CD8-positive, alpha-beta T cell (primary cell): ENCODE measurements at regions of chr2 and their contacts with region 1.

Region 1: GRCh38 chr2:68467077-68467960 is at the starts of genes APLF and FBXO48:
- DNase-seq: peak; percentile 96 to 99 (median 98)
- ATAC-seq: peak; percentile 87
- H3K4me3 ChIP-seq: peak within 1 kb of the TSS; percentile 83 to 88
- H3K4me3 Mint-ChIP-seq: peak within 1 kb of the TSS; percentile 96
- H3K27ac ChIP-seq: peak within 1 kb of the TSS; percentile 82 to 89
- H3K27ac Mint-ChIP-seq: peak within 1 kb of the TSS; percentile 97
- H3K4me1 ChIP-seq: peaks cover 26% of the 10 kb centered on the region
- H3K4me1 Mint-ChIP-seq: peaks cover 44% of the 10 kb centered on the region
- H3K27me3 ChIP-seq: no peaks in the 10 kb centered on the region
- H3K27me3 Mint-ChIP-seq: no peaks in the 10 kb centered on the region
- CTCF ChIP-seq: no peak
- total RNA-seq, gene APLF: 4.1 to 4.2 TPM
- total RNA-seq, gene FBXO48: 0.22 to 0.30 TPM

Region 2: DNA sequence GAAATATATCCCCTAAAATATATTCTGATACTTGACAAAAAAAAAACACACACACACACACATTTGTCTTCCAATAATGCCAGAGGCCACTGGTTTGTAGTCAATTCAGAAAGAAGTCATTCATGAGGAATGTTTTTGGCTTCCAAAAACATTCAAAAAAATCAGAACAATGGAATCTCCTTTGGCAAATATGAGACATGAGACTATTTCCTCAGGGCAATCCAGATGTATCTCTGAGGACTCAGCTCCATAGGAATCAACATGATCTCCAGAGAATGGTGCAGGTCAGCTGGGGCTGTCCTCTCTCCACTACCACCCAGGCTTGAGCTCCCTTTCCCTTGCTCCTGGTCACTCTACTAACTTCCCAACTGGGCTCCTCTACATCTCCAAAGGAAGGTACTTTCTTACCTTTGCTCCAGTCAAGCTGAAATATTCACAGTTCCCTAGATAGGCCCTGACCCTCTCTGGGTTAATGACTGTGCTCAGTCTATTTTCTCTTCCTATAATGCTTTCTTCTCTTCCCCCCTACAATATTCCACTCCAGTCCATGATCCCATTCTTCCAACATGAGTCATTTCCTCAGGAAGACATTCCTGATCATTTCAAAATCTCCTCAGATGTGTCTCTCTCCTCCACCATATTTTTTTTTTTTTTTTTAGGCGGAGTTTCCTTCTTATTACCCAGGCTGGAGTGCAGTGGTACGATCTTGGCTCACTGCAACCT is 549.8 kb before region 1 on chr2:
- CTCF ChIA-PET with region 1: no interaction called
- POLR2A ChIA-PET with region 1: no interaction called
- intact Hi-C with region 1: no loop called
- DNase-seq: no peak
- ATAC-seq: no peak
- H3K4me3 ChIP-seq: no peak overlapping the region
- H3K4me3 Mint-ChIP-seq: no peak overlapping the region
- H3K27ac ChIP-seq: no peak overlapping the region
- H3K27ac Mint-ChIP-seq: no peak overlapping the region
- H3K4me1 ChIP-seq: no peaks in the 10 kb centered on the region
- H3K4me1 Mint-ChIP-seq: no peaks in the 10 kb centered on the region
- H3K27me3 ChIP-seq: no peaks in the 10 kb centered on the region
- H3K27me3 Mint-ChIP-seq: peaks cover 16% of the 10 kb centered on the region
- CTCF ChIP-seq: no peak

Region 3: GRCh38 chr2:68251187-68251854 is 216.0 kb before region 1 on chr2:
- CTCF ChIA-PET with region 1: no interaction called
- POLR2A ChIA-PET with region 1: no interaction called
- intact Hi-C with region 1: loop called (anchors 1 kb)
- DNase-seq: peak; percentile 54 to 94 (median 76)
- ATAC-seq: peak; percentile 66
- H3K4me3 ChIP-seq: peak overlapping the region; percentile 68
- H3K4me3 Mint-ChIP-seq: peak overlapping the region; percentile 89
- H3K27ac ChIP-seq: peak overlapping the region; percentile 84 to 85
- H3K27ac Mint-ChIP-seq: peak overlapping the region; percentile 95
- H3K4me1 ChIP-seq: peaks cover 60% of the 10 kb centered on the region
- H3K4me1 Mint-ChIP-seq: peaks cover 42% of the 10 kb centered on the region
- H3K27me3 ChIP-seq: no peaks in the 10 kb centered on the region
- H3K27me3 Mint-ChIP-seq: no peaks in the 10 kb centered on the region
- CTCF ChIP-seq: peak; percentile 70

Region 4: DNA sequence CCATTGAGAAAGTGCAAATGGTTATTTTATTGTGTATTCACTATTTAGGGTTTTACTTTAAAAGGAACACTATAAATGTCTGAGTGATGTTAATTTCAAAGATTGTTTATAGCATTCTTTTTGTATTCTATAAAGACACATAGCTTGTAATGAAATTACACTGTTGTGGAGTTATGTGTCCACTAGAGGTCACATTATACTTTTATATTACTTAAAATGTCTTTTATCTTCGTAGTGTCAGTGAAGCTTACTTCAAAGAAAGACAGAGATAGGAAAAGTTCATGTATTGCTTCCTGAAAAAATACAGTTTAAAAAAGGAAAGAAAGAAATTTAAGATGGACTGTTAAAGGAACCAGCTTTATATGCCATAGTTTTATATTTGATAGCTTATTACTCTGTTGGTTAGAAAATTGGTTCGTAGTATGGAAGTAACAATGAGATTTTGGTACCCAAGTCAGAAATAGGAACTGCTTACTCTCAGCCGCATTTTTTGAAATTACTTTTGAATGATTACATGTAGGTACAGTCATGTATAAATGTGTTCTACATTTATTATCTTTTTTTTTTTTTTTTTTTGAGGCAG is 20.5 kb after region 1 on chr2:
- CTCF ChIA-PET with region 1: interaction called, 33 read pairs
- POLR2A ChIA-PET with region 1: interaction called, 4 read pairs
- intact Hi-C with region 1: loop called (anchors 1 kb)
- DNase-seq: peak in 2 of 9 experiments; percentile 36 to 54
- ATAC-seq: peak; percentile 71
- H3K4me3 ChIP-seq: no peak overlapping the region
- H3K4me3 Mint-ChIP-seq: no peak overlapping the region
- H3K27ac ChIP-seq: no peak overlapping the region
- H3K27ac Mint-ChIP-seq: no peak overlapping the region
- H3K4me1 ChIP-seq: no peaks in the 10 kb centered on the region
- H3K4me1 Mint-ChIP-seq: peaks cover 3% of the 10 kb centered on the region
- H3K27me3 ChIP-seq: no peaks in the 10 kb centered on the region
- H3K27me3 Mint-ChIP-seq: no peaks in the 10 kb centered on the region
- CTCF ChIP-seq: peak; percentile 65

Region 5: GRCh38 chr2:68721482-68722101 is 254.3 kb after region 1 on chr2:
- CTCF ChIA-PET with region 1: interaction called, 10 read pairs
- POLR2A ChIA-PET with region 1: no interaction called
- intact Hi-C with region 1: loop called in 1 of 2 experiments (anchors 5 kb)
- DNase-seq: peak in 7 of 9 experiments; percentile 16 to 76 (median 46)
- ATAC-seq: peak; percentile 73
- H3K4me3 ChIP-seq: peak overlapping the region in 1 of 2 experiments; percentile 4
- H3K4me3 Mint-ChIP-seq: peak overlapping the region; percentile 72
- H3K27ac ChIP-seq: peak overlapping the region in 1 of 2 experiments; percentile 63
- H3K27ac Mint-ChIP-seq: peak overlapping the region; percentile 87
- H3K4me1 ChIP-seq: peaks cover 71% of the 10 kb centered on the region
- H3K4me1 Mint-ChIP-seq: peaks cover 82% of the 10 kb centered on the region
- H3K27me3 ChIP-seq: no peaks in the 10 kb centered on the region
- H3K27me3 Mint-ChIP-seq: no peaks in the 10 kb centered on the region
- CTCF ChIP-seq: no peak

Region 6: DNA sequence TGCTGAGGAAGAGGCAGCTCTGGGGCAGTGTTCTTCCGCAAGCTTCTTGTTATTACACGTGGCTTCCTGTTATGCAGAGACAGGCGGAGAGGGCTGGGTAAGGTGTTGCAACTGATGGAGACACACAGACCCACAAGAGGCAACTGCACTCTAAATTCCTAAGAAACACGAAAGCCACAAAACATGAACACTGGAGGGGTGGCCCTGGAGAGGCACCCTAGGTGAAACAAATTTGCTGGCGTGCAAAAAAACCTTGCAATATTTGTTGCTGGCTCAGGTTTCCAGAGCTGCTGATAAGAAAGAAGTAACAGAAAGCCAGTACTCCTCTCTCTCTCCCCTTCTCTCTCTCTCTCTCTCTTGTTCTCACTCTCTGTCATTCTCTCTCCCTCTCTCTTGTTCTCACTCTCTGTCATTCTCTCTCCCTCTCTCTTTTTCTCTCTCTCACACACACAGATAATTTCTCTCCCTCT is 299.1 kb after region 1 on chr2:
- CTCF ChIA-PET with region 1: interaction called, 5 read pairs
- POLR2A ChIA-PET with region 1: interaction called, 3 read pairs
- intact Hi-C with region 1: loop called in 1 of 2 experiments (anchors 5 kb)
- DNase-seq: peak; percentile 37 to 91 (median 75)
- ATAC-seq: peak; percentile 62
- H3K4me3 ChIP-seq: peak overlapping the region; percentile 25 to 34
- H3K4me3 Mint-ChIP-seq: peak overlapping the region; percentile 81
- H3K27ac ChIP-seq: peak overlapping the region; percentile 73 to 88
- H3K27ac Mint-ChIP-seq: peak overlapping the region; percentile 100
- H3K4me1 ChIP-seq: peaks cover 98% of the 10 kb centered on the region
- H3K4me1 Mint-ChIP-seq: peaks cover 95% of the 10 kb centered on the region
- H3K27me3 ChIP-seq: no peaks in the 10 kb centered on the region
- H3K27me3 Mint-ChIP-seq: no peaks in the 10 kb centered on the region
- CTCF ChIP-seq: no peak

Region 7: GRCh38 chr2:68918497-68918896 is 451.2 kb after region 1 on chr2:
- CTCF ChIA-PET with region 1: interaction called, 11 read pairs
- POLR2A ChIA-PET with region 1: no interaction called
- intact Hi-C with region 1: no loop called
- DNase-seq: no peak
- ATAC-seq: no peak
- H3K4me3 ChIP-seq: no peak overlapping the region
- H3K4me3 Mint-ChIP-seq: no peak overlapping the region
- H3K27ac ChIP-seq: no peak overlapping the region
- H3K27ac Mint-ChIP-seq: no peak overlapping the region
- H3K4me1 ChIP-seq: no peaks in the 10 kb centered on the region
- H3K4me1 Mint-ChIP-seq: no peaks in the 10 kb centered on the region
- H3K27me3 ChIP-seq: no peaks in the 10 kb centered on the region
- H3K27me3 Mint-ChIP-seq: no peaks in the 10 kb centered on the region
- CTCF ChIP-seq: no peak